IMR-90 (cell line): ENCODE measurements at regions of chr3 and their contacts with region 1.

Region 1: GRCh38 chr3:153026026-153026425 is 136.0 kb upstream of the RAP2B start:
- DNase-seq: peak; percentile 52
- ATAC-seq: no peak
- H3K4me3 ChIP-seq: no peak overlapping the region
- H3K27ac ChIP-seq: no peak overlapping the region
- H3K4me1 ChIP-seq: 0 out of 2 replicates have a peak, but pooled peaks cover 1% of the 10 kb centered on the region
- H3K27me3 ChIP-seq: peaks cover 6% of the 10 kb centered on the region
- CTCF ChIP-seq: peak; percentile 79
- POLR2A ChIP-seq: no peak
- RAD21 ChIP-seq: peak; percentile 83

Region 2: DNA sequence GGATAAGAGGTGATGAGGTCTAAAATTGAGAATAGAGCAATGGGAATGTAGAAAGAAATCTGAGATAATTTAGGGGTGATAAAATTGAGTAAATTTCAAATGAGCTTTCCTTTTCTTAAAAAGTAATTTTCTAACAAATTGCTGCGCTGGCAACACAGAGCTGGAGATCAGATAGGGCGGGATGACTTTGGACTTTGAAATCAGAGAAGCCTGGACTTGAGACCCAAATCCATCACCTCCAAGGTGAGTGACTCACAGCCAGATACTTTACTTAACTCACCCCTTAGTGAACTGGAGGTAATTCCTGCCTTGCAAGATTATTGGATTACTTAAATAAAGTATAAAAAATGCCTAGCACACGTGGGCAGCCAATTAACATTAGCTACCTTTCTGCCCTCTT is 110.3 kb before region 1 on chr3:
- CTCF ChIA-PET with region 1: no interaction called
- POLR2A ChIA-PET with region 1: no interaction called
- dilution Hi-C with region 1: no loop called
- in situ Hi-C with region 1: no loop called
- intact Hi-C with region 1: no loop called
- DNase-seq: no peak
- ATAC-seq: no peak
- H3K4me3 ChIP-seq: no peak overlapping the region
- H3K27ac ChIP-seq: no peak overlapping the region
- H3K4me1 ChIP-seq: no peaks in the 10 kb centered on the region
- H3K27me3 ChIP-seq: no peaks in the 10 kb centered on the region
- CTCF ChIP-seq: no peak
- POLR2A ChIP-seq: no peak
- RAD21 ChIP-seq: no peak

Region 3: GRCh38 chr3:153038779-153039178 is 12.8 kb after region 1 on chr3:
- CTCF ChIA-PET with region 1: no interaction called
- POLR2A ChIA-PET with region 1: no interaction called
- dilution Hi-C with region 1: no loop called
- in situ Hi-C with region 1: no loop called
- intact Hi-C with region 1: no loop called
- DNase-seq: no peak
- ATAC-seq: no peak
- H3K4me3 ChIP-seq: no peak overlapping the region
- H3K27ac ChIP-seq: no peak overlapping the region
- H3K4me1 ChIP-seq: peaks cover 1% of the 10 kb centered on the region
- H3K27me3 ChIP-seq: no peaks in the 10 kb centered on the region
- CTCF ChIP-seq: no peak
- POLR2A ChIP-seq: no peak
- RAD21 ChIP-seq: no peak

Region 4: DNA sequence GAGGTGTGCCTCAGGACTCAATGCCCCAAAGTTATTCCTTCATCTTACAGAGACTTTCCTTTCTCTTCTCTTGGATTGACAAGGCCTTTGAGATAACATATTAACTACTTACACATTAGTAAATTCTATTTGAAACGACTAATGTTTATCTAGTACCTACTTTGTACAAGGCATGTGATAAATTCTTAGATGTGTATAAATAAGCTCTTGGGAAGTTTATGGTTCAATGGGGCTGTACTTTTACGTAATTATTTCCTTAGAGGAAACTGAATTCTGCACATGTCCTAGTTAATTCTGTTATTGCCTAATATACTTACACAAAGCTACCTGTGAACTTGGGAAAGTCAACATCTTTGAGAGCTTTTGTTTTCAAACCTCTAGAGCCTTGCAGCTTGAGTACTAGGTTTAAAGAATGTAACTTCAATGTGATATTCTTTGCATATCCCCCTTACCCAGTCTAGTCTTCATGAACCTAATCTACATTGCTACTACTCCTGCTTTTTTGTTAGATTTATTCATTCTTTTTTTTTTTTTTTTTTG is 77.5 kb after region 1 on chr3:
- CTCF ChIA-PET with region 1: no interaction called
- POLR2A ChIA-PET with region 1: no interaction called
- dilution Hi-C with region 1: no loop called
- in situ Hi-C with region 1: no loop called
- intact Hi-C with region 1: no loop called
- DNase-seq: no peak
- ATAC-seq: no peak
- H3K4me3 ChIP-seq: no peak overlapping the region
- H3K27ac ChIP-seq: no peak overlapping the region
- H3K4me1 ChIP-seq: no peaks in the 10 kb centered on the region
- H3K27me3 ChIP-seq: no peaks in the 10 kb centered on the region
- CTCF ChIP-seq: no peak
- POLR2A ChIP-seq: no peak
- RAD21 ChIP-seq: no peak

Region 5: GRCh38 chr3:153595186-153595815 is 569.3 kb after region 1 on chr3:
- CTCF ChIA-PET with region 1: no interaction called
- POLR2A ChIA-PET with region 1: no interaction called
- dilution Hi-C with region 1: no loop called
- in situ Hi-C with region 1: no loop called
- intact Hi-C with region 1: loop called (anchors 1 kb)
- DNase-seq: peak; percentile 50
- ATAC-seq: peak; percentile 52; the same call in 1 of the 2 replicates
- H3K4me3 ChIP-seq: no peak overlapping the region
- H3K27ac ChIP-seq: no peak overlapping the region
- H3K4me1 ChIP-seq: 0 out of 2 replicates have a peak, but pooled peaks cover 2% of the 10 kb centered on the region
- H3K27me3 ChIP-seq: peaks cover 16% of the 10 kb centered on the region
- CTCF ChIP-seq: peak; percentile 75
- POLR2A ChIP-seq: no peak
- RAD21 ChIP-seq: peak; percentile 82

Region 6: GRCh38 chr3:153768561-153769469 is 742.8 kb after region 1 on chr3:
- CTCF ChIA-PET with region 1: no interaction called
- POLR2A ChIA-PET with region 1: no interaction called
- dilution Hi-C with region 1: no loop called
- in situ Hi-C with region 1: loop called (anchors 5 kb)
- intact Hi-C with region 1: loop called (anchors 1 kb)
- DNase-seq: peak; percentile 61
- ATAC-seq: peak; percentile 100
- H3K4me3 ChIP-seq: no peak overlapping the region
- H3K27ac ChIP-seq: no peak overlapping the region
- H3K4me1 ChIP-seq: no peaks in the 10 kb centered on the region
- H3K27me3 ChIP-seq: no peaks in the 10 kb centered on the region
- CTCF ChIP-seq: peak; percentile 84
- POLR2A ChIP-seq: no peak
- RAD21 ChIP-seq: peak; percentile 87

Region 7: GRCh38 chr3:153970741-153971347 is 944.8 kb after region 1 on chr3:
- CTCF ChIA-PET with region 1: interaction called, 3 read pairs
- POLR2A ChIA-PET with region 1: no interaction called
- dilution Hi-C with region 1: no loop called
- in situ Hi-C with region 1: loop called (anchors 25 kb)
- intact Hi-C with region 1: loop called (anchors 2 kb)
- DNase-seq: peak; percentile 34
- ATAC-seq: 0 out of 2 replicates have a peak, but pooled peaks have one; percentile 35
- H3K4me3 ChIP-seq: no peak overlapping the region
- H3K27ac ChIP-seq: no peak overlapping the region
- H3K4me1 ChIP-seq: no peaks in the 10 kb centered on the region
- H3K27me3 ChIP-seq: no peaks in the 10 kb centered on the region
- CTCF ChIP-seq: peak; percentile 35
- POLR2A ChIP-seq: no peak
- RAD21 ChIP-seq: peak; percentile 36

Region 8: GRCh38 chr3:154095832-154096421 is 1069.9 kb after region 1 on chr3:
- CTCF ChIA-PET with region 1: no interaction called
- POLR2A ChIA-PET with region 1: no interaction called
- dilution Hi-C with region 1: no loop called
- in situ Hi-C with region 1: no loop called
- intact Hi-C with region 1: loop called (anchors 5 kb)
- DNase-seq: peak; percentile 55
- ATAC-seq: peak; percentile 72
- H3K4me3 ChIP-seq: no peak overlapping the region
- H3K27ac ChIP-seq: no peak overlapping the region
- H3K4me1 ChIP-seq: no peaks in the 10 kb centered on the region
- H3K27me3 ChIP-seq: 0 out of 2 replicates have a peak, but pooled peaks cover 2% of the 10 kb centered on the region
- CTCF ChIP-seq: peak; percentile 67
- POLR2A ChIP-seq: no peak
- RAD21 ChIP-seq: peak; percentile 70